ENCODE measurements at regions of chr15 and their contacts with region 1.

Region 1: DNA sequence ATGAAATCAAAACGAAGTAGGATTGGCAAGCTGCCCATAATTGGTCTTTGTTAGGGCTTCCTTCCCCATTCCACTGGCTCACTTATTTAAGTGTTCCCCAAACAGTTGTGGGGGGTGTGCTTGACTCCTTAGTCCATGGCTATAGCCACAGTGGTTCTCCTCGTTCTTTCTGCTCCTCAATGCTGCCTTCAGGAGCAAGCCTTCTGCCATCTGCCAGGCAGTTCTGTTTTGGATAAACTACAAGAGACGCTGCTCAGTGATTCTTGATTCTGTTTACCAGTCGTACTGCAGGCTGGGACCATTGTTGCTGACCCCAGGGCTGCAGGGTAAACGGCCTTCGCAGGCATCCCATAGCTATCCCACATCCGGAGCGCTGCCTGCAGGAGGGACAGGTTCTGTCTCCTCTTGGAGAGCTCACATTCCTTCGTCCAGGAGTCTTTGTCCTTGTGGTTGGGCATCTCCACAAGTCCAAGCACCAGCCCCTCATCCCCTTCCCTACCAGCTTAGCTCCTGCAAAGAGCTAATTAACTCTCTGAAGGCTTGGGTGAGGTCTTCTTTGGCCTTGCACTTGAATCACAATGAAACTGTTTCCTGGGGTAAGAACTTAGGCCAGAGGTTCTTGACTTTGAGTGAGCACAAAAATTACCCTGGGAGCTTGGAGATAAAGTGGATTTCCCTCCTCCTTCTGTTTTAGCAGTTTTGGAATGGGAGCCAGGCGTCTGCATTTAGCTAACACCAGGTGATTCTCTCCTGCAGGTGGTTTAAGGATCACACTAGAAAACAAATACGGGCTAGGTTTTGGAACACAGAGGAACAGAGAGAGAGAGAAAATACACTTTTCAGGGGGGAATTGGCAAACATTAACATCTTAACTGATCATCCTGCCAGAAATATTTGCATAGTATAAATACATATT is 114.9 kb downstream of the SV2B start:
- DNase-seq: no peak
- ATAC-seq: no peak
- H3K4me3 ChIP-seq: no peak overlapping the region
- H3K27ac ChIP-seq: no peak overlapping the region
- H3K4me1 ChIP-seq: no peaks in the 10 kb centered on the region
- H3K27me3 ChIP-seq: no peaks in the 10 kb centered on the region; a peak in 1 of 4 replicates
- CTCF ChIP-seq: no peak
- EP300 ChIP-seq: no peak
- POLR2A ChIP-seq: no peak
- RAD21 ChIP-seq: no peak

Region 2: DNA sequence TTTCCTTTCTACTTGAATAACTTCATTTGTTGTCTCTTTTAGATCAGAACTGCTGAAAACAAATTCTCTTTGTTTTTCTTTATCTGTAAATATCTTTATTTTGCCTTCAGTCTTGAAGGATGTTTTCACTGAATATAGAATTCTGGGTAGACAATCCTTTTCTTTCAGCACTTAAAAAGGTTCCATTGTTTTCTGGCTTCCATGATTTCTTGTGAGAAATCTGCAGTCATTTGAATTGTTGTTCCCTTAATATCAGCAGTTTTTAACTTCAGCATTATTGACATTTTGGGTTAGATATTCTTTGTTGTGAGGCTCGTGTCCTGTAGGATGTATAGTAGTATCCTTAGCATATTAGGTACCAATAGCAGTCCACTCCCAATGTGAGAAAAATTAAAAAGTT is 49.1 kb before region 1 on chr15:
- CTCF ChIA-PET with region 1: no interaction called
- POLR2A ChIA-PET with region 1: no interaction called
- RAD21 ChIA-PET with region 1: no interaction called
- SMC1A ChIA-PET with region 1: no interaction called
- in situ Hi-C with region 1: loop called (anchors 5 kb)
- intact Hi-C with region 1: no loop called
- DNase-seq: no peak
- ATAC-seq: no peak
- H3K4me3 ChIP-seq: no peak overlapping the region
- H3K27ac ChIP-seq: no peak overlapping the region
- H3K4me1 ChIP-seq: no peaks in the 10 kb centered on the region
- H3K27me3 ChIP-seq: no peaks in the 10 kb centered on the region; a peak in 1 of 4 replicates
- CTCF ChIP-seq: no peak
- EP300 ChIP-seq: no peak
- POLR2A ChIP-seq: no peak
- RAD21 ChIP-seq: no peak

Region 3: GRCh38 chr15:91529534-91529933 is 314.6 kb after region 1 on chr15:
- CTCF ChIA-PET with region 1: no interaction called
- POLR2A ChIA-PET with region 1: no interaction called
- RAD21 ChIA-PET with region 1: no interaction called
- SMC1A ChIA-PET with region 1: no interaction called
- in situ Hi-C with region 1: no loop called
- intact Hi-C with region 1: no loop called
- DNase-seq: no peak
- ATAC-seq: no peak
- H3K4me3 ChIP-seq: no peak overlapping the region
- H3K27ac ChIP-seq: no peak overlapping the region
- H3K4me1 ChIP-seq: no peaks in the 10 kb centered on the region
- H3K27me3 ChIP-seq: no peaks in the 10 kb centered on the region; a peak in 1 of 4 replicates
- CTCF ChIP-seq: no peak
- EP300 ChIP-seq: no peak
- POLR2A ChIP-seq: no peak
- RAD21 ChIP-seq: no peak

Measured in GM12878 (cell line).